ENCODE measurements at regions of chr2 and their contacts with region 1.

Region 1: DNA sequence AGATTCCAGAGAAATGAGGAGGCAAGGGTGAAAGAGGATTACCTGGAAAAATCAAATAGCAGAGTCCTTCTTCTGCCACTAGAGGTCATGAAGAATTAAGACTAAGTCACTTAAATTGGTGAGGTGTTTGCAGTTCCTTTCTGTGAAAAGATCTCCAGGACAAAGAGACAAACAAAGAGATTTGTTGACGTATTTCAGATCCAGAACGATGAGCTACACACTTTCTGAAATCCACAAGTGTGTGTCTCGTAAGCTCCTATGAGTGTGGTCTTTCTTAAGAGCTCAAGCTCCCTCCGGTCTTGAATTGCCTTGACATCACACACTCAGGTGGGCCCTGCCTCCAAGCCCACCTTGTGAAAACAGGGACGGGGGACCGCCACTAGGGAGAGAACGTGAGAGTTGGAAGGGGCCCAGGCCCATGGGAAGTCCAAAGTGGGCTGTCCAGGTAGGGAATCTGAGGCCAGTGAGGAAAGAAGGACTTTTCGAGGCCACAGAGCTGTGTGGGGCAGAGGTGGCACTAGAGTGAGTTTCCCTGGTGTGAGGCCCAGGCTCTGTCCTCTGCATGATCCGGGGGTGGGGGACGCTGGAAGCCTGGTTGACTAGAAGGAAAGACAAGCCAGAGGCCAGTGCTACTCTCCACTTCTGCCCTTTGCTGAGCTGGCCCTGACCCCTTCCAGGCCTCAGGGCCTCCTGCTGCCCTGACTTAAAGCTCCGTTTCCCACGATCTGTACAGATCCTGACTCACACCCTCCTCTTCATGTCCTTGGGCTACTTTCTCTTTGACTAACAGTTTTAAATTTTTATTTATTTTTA is 168.1 kb upstream of the NCK2 start:
- DNase-seq: peak; percentile 70
- CTCF ChIP-seq: peak; percentile 48

Region 2: GRCh38 chr2:105969555-105969954 is 392.9 kb after region 1 on chr2:
- in situ Hi-C with region 1: loop called (anchors 25 kb)
- DNase-seq: no peak
- CTCF ChIP-seq: no peak

Measured in GM13976 (cell line).